ENCODE measurements at regions of chr2 and their contacts with region 1.

Region 1: DNA sequence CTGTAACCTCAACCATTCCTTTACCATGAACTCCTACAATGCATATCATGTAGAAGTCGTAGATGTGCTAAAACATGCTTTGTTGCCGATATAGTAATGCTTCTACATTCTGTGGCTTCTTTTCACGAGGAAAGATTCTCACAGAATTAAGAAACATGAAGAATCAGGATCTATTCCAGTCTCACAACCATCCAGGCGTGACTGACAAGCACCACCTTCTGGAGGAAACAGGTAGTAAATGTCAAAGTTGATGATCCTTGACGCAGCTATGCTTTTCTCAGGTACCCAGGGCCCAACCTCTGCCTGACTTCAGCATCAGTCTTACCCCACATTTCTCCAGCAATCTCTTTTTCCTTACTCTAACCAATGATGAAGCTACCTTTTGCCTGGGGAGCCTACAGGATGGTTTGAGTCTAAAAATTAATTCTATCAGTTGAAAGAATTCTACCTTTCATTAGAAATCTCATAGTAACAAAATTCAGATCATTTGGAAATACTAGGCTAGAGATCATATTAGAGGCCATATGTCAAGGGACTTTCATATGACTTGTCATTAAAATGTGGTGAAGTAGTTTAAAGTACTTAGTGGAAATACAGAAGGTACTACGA is 123.3 kb upstream of the RND3 start:
- DNase-seq: peak; percentile 16
- H3K4me3 ChIP-seq: no peak overlapping the region
- H3K27ac ChIP-seq: no peak overlapping the region
- H3K4me1 ChIP-seq: peaks cover 0 to 6% (median 2%) of the 10 kb centered on the region in 4 donors
- H3K27me3 ChIP-seq: no peaks in the 10 kb centered on the region
- CTCF ChIP-seq: peak; percentile 39 to 64 (median 49)
- EP300 ChIP-seq: no peak
- POLR2A ChIP-seq: no peak

Region 2: GRCh38 chr2:150520887-150521664 is 89.7 kb before region 1 on chr2:
- in situ Hi-C with region 1: loop called in 1 of 4 experiments (anchors 25 kb)
- intact Hi-C with region 1: no loop called
- DNase-seq: no peak
- H3K4me3 ChIP-seq: no peak overlapping the region
- H3K27ac ChIP-seq: no peak overlapping the region
- H3K4me1 ChIP-seq: peaks cover 0 to 7% (median 0%) of the 10 kb centered on the region in 4 donors
- H3K27me3 ChIP-seq: no peaks in the 10 kb centered on the region
- CTCF ChIP-seq: no peak
- EP300 ChIP-seq: no peak
- POLR2A ChIP-seq: no peak